Activated T-helper 2 cell treated with anti-CD3 and anti-CD28 coated beads, Interferon-gamma antibody, Interleukin-2, Interleukin-4, amounts not matched to agents 10 μg/mL and 5 μg/mL and 100 μg/mL, durations not matched to agents 14 hours and 24 hours and 36 hours (primary cell): ENCODE measurements at regions of chr5 and their contacts with region 1.

Region 1: DNA sequence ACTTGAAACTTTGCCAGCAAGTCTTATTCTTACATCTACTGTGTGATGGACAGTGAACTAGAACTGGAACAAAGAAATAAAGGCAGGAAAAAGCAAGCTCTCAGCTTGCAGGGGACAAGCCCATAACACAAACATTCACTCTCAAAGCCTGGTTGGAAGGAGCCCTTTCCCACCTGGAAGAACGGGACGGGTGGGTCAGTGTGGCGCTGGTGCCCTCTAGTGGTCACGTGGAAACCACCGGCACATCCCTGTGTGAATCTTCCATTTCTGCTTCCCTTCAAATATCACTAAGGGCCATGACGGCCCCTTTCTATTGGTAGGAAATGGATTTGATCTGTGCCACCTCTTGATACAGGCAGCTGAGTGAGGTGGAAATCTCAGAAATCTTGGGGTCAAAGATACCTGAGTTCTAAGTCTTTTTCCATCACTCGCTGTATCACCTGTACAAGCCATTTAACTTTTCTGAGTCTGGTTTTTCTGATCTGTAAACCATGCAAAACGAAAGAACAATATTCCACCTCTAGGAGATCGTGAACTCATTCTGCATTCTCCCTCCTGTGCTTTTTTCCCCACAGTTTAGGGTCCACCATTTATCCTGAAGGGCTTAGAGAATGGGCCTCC is 211.6 kb downstream of the MSX2 start:
- DNase-seq: no peak
- H3K4me3 Mint-ChIP-seq: no peak overlapping the region
- H3K27ac Mint-ChIP-seq: no peak overlapping the region
- H3K4me1 Mint-ChIP-seq: no peaks in the 10 kb centered on the region
- H3K27me3 Mint-ChIP-seq: no peaks in the 10 kb centered on the region

Region 2: GRCh38 chr5:174384509-174384947 is 551.4 kb before region 1 on chr5:
- intact Hi-C with region 1: no loop called
- DNase-seq: no peak
- H3K4me3 Mint-ChIP-seq: no peak overlapping the region
- H3K27ac Mint-ChIP-seq: no peak overlapping the region
- H3K4me1 Mint-ChIP-seq: no peaks in the 10 kb centered on the region
- H3K27me3 Mint-ChIP-seq: no peaks in the 10 kb centered on the region

Region 3: GRCh38 chr5:174910245-174910737 is 25.7 kb before region 1 on chr5:
- intact Hi-C with region 1: loop called (anchors 2 kb)
- DNase-seq: peak; percentile 42
- H3K4me3 Mint-ChIP-seq: no peak overlapping the region
- H3K27ac Mint-ChIP-seq: no peak overlapping the region
- H3K4me1 Mint-ChIP-seq: peaks cover 2% of the 10 kb centered on the region
- H3K27me3 Mint-ChIP-seq: peaks cover 15% of the 10 kb centered on the region